GM10248 (cell line): ENCODE measurements at regions of chr2 and their contacts with region 1.

Region 1: GRCh38 chr2:65416945-65417344 is 15.5 kb downstream of the SPRED2 start:
- DNase-seq: no peak
- CTCF ChIP-seq: no peak

Region 2: GRCh38 chr2:65429786-65430602 is 13.0 kb after region 1 on chr2:
- CTCF ChIA-PET with region 1: interaction called, 10 read pairs
- POLR2A ChIA-PET with region 1: interaction called, 5 read pairs
- DNase-seq: no peak
- CTCF ChIP-seq: no peak